ENCODE measurements at regions of chr1 and their contacts with region 1.

Region 1: DNA sequence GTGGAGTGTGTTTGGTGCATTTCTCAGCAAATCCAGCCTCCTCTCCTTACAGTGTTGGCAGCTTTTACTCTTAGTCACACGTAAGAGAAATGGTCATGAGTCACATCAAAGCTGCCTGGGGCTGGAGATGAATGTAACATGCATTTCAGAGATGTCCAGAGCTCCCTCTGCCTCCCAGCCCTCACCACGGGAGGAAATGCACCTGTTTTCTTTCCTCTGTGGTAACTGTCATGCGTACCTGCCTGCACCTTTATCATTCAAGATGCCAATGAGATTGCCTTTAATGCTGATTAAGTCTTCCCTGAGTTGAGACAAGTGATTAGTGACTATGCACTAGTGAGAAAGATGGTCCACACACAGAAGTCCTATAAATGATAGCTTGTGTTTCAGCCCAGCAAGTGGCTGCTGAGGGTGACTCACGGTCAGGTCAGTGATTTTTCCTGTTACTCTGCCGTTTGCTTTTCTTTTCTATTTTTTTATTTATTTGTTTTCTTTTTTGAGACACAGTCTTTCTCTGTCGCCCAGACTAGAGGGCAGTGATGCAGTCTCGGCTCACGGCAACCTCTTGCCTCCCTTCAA is 277.3 kb upstream of the FMN2 start:
- DNase-seq: peak; percentile 69
- H3K4me3 Mint-ChIP-seq: peak overlapping the region; percentile 54
- H3K27ac Mint-ChIP-seq: peak overlapping the region; percentile 69
- H3K4me1 Mint-ChIP-seq: peaks cover 51% of the 10 kb centered on the region
- H3K27me3 Mint-ChIP-seq: no peaks in the 10 kb centered on the region
- CTCF ChIP-seq: no peak

Region 2: GRCh38 chr1:238960071-238960470 is 854.3 kb before region 1 on chr1:
- CTCF ChIA-PET with region 1: no interaction called
- intact Hi-C with region 1: loop called (anchors 10 kb)
- DNase-seq: no peak
- H3K4me3 Mint-ChIP-seq: peak overlapping the region; percentile 33
- H3K27ac Mint-ChIP-seq: peak overlapping the region; percentile 17
- H3K4me1 Mint-ChIP-seq: peaks cover 38% of the 10 kb centered on the region
- H3K27me3 Mint-ChIP-seq: no peaks in the 10 kb centered on the region
- CTCF ChIP-seq: no peak

Region 3: DNA sequence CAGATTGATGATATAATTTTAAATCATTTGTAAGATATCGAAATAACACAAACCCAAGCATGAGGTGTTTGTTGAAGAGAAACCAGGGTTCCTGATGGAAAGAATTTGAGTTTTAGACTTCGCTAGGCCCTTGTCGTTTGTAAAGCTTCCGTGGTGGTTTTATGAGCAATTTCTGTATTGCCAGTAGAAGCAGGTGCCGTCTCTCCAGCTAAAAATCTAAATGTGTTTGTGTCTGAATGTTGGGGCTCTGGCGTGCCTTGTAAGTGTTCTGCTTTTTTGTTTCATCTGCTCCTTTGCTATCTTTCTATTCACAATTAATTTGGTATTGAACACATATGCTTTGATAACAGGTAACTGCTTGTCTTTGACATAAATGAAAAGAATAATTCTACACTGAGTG is 400.5 kb before region 1 on chr1:
- CTCF ChIA-PET with region 1: no interaction called
- intact Hi-C with region 1: loop called (anchors 5 kb)
- DNase-seq: no peak
- H3K4me3 Mint-ChIP-seq: no peak overlapping the region
- H3K27ac Mint-ChIP-seq: no peak overlapping the region
- H3K4me1 Mint-ChIP-seq: no peaks in the 10 kb centered on the region
- H3K27me3 Mint-ChIP-seq: no peaks in the 10 kb centered on the region
- CTCF ChIP-seq: no peak

Region 4: DNA sequence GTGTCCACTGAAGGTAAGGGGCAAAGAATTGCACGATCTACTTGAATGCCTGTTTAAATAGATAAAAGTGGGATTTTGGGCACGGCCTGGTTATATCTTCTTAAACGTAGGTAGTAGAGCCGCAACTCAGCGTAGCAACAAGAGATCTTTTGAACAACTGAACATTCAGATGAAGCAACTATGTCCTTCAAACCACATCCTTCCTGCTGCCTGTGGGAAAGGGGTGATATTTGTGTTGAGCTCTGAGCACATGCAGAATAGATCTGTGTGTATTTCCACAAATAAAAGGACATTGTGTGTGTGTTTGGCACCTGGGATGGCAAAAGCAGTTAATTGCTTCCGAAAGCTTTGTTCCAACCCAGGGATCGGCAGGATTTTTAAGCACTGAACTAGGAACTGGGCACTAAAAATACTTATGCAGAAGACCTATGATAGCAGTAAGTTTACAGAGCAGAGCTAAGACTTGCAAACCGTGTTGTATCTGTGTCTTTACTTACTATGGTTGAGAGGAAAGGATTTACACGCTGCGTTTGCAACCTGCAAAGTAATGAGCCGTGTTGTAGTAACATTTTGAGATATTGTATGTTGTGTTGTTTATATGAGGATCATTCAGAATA is 94.6 kb before region 1 on chr1:
- CTCF ChIA-PET with region 1: no interaction called
- intact Hi-C with region 1: loop called (anchors 5 kb)
- DNase-seq: no peak
- H3K4me3 Mint-ChIP-seq: no peak overlapping the region
- H3K27ac Mint-ChIP-seq: no peak overlapping the region
- H3K4me1 Mint-ChIP-seq: peaks cover 23% of the 10 kb centered on the region
- H3K27me3 Mint-ChIP-seq: no peaks in the 10 kb centered on the region
- CTCF ChIP-seq: no peak

Region 5: DNA sequence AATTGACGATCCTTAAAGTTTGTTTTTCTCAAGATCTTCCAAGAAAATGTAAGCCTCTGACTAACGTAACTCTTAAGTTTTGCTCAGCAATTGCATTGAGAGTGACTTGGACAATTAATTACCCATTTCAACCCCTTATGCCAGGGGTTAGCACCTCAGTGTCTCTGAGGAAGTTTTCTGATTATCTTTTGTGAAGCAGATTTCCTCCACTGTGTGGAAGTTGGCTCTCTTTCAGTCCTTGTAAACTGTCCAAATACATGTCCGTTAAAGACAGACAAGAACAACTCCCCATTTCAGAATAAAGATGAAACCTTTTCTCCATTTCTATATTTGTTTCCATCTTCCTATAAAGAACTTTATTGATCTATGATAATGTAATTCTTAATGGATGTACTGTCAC is 19.1 kb before region 1 on chr1:
- CTCF ChIA-PET with region 1: interaction called, 10 read pairs
- intact Hi-C with region 1: no loop called
- DNase-seq: no peak
- H3K4me3 Mint-ChIP-seq: no peak overlapping the region
- H3K27ac Mint-ChIP-seq: no peak overlapping the region
- H3K4me1 Mint-ChIP-seq: no peaks in the 10 kb centered on the region
- H3K27me3 Mint-ChIP-seq: no peaks in the 10 kb centered on the region
- CTCF ChIP-seq: no peak

Region 6: DNA sequence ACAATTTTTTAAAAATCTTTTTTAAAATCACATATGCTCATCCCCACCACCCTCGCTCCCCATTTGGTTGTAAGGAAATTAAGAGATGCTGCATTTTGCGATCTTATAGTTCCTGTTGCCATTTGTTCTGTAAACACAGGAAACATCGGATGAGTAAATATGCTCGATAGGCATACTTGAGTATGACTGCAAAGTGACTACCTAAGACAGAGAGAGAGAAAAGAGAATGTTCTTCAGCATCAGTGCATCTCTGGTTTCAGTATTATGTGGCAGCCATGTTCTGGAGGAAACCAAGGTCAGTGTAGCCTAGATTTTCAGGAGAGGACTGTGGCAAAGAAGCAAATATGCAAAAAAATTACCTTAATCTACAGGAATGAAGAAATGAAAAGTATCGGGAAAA is 11.8 kb after region 1 on chr1:
- CTCF ChIA-PET with region 1: no interaction called
- intact Hi-C with region 1: no loop called
- DNase-seq: no peak
- H3K4me3 Mint-ChIP-seq: no peak overlapping the region
- H3K27ac Mint-ChIP-seq: no peak overlapping the region
- H3K4me1 Mint-ChIP-seq: no peaks in the 10 kb centered on the region
- H3K27me3 Mint-ChIP-seq: no peaks in the 10 kb centered on the region
- CTCF ChIP-seq: no peak